CD8-positive, alpha-beta T cell (primary cell): ENCODE measurements at regions of chr20 and their contacts with region 1.

Region 1: DNA sequence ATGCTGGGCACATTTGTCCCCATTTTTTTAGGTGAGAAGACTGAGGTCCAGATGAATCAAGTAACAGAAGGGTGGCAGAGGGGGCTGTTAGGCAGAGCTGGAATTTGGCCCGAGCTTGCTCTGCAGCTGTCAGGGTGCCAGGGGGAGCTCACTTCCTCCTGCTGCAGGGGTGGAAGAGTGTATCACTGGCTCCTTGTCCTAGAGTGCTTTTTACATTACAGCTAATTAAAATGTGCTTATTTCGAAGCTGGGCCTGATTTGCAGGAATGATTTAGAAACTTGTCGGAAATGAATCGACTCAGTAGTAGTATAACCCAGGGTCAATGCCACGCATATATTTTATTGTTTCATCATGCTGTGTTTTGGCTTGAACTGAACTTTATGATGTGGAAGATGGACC is 11.1 kb downstream of the TOX2 start:
- DNase-seq: peak in 5 of 9 experiments; percentile 33 to 57 (median 49)
- ATAC-seq: peak; percentile 79
- H3K4me3 ChIP-seq: peak overlapping the region in 1 of 2 experiments; percentile 6
- H3K4me3 Mint-ChIP-seq: peak overlapping the region; percentile 44
- H3K27ac ChIP-seq: no peak overlapping the region
- H3K27ac Mint-ChIP-seq: no peak overlapping the region
- H3K4me1 ChIP-seq: peaks cover 31% of the 10 kb centered on the region
- H3K4me1 Mint-ChIP-seq: peaks cover 48% of the 10 kb centered on the region
- H3K27me3 ChIP-seq: peaks cover 0 to 4% of the 10 kb centered on the region in 2 experiments
- H3K27me3 Mint-ChIP-seq: peaks cover 20% of the 10 kb centered on the region
- CTCF ChIP-seq: no peak

Region 2: GRCh38 chr20:43969501-43970182 is 43.8 kb after region 1 on chr20:
- CTCF ChIA-PET with region 1: no interaction called
- POLR2A ChIA-PET with region 1: no interaction called
- intact Hi-C with region 1: loop called in 1 of 2 experiments (anchors 5 kb)
- DNase-seq: no peak
- ATAC-seq: no peak
- H3K4me3 ChIP-seq: no peak overlapping the region
- H3K4me3 Mint-ChIP-seq: no peak overlapping the region
- H3K27ac ChIP-seq: no peak overlapping the region
- H3K27ac Mint-ChIP-seq: no peak overlapping the region
- H3K4me1 ChIP-seq: peaks cover 9% of the 10 kb centered on the region
- H3K4me1 Mint-ChIP-seq: peaks cover 12% of the 10 kb centered on the region
- H3K27me3 ChIP-seq: peaks cover 0 to 3% of the 10 kb centered on the region in 2 experiments
- H3K27me3 Mint-ChIP-seq: no peaks in the 10 kb centered on the region
- CTCF ChIP-seq: no peak

Region 3: DNA sequence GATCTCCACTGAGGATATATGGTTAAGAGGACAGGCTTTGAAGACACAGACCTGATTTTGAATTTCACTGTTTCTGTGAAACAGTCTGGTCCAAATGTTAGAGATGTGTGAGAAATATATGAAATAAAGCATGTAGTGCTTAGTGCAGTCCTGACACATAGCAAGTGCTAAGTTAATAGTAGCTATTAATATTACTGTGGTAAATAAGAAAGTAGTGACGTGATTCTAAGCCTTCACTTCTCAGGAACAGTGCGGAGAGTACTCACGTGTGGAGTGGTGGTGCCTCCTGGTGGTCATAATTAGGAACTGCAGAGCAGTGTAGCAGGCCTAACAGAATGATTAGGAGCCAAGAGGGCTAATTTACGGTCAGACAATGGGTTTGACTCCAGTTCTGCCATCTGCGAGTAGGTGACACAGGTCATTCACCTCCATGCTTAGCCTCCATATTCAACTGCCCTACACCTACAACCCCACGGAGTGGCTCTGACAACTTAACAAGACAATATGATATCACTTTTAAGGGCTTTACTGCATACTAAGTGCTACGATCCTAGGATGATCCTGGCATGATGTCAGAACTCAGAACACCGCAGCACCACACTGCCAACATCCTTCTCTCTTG is 155.0 kb after region 1 on chr20:
- CTCF ChIA-PET with region 1: interaction called, 6 read pairs
- POLR2A ChIA-PET with region 1: no interaction called
- intact Hi-C with region 1: loop called (anchors 1 to 2 kb)
- DNase-seq: peak; percentile 61 to 88 (median 79)
- ATAC-seq: peak; percentile 99
- H3K4me3 ChIP-seq: no peak overlapping the region
- H3K4me3 Mint-ChIP-seq: no peak overlapping the region
- H3K27ac ChIP-seq: no peak overlapping the region
- H3K27ac Mint-ChIP-seq: peak overlapping the region; percentile 2
- H3K4me1 ChIP-seq: peaks cover 7% of the 10 kb centered on the region
- H3K4me1 Mint-ChIP-seq: peaks cover 21% of the 10 kb centered on the region
- H3K27me3 ChIP-seq: no peaks in the 10 kb centered on the region
- H3K27me3 Mint-ChIP-seq: no peaks in the 10 kb centered on the region
- CTCF ChIP-seq: peak; percentile 98